Activated CD8-positive, alpha-beta T cell treated with anti-CD3 and anti-CD28 coated beads for 36 hours (primary cell): ENCODE measurements at regions of chr10 and their contacts with region 1.

Region 1: DNA sequence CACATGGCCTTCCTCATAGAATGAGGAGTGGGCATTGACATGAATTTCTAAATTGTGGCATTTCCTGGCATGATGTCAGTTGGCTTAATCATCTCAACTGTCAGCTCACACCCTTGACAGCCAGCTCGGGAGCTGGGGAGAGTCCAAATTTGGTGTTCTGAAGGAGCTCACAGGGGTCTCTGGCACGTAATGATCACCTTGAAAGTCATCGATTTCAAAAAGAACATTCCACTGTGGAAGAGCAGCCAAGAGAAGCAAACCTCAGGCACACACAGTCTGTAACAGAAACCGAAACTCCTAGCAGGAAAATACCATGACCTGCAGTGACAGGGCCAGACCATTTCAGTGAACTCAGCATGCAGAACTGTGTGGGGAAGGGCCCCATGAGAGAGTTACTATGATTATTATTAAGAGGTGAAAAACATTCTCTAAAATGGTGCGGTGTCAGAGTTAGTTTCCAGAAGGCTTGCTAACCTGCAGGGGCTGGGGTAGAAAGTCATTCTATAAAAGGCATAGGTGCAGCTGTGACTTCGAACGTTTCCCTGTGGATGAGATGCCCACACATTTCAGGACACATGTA is 26.4 kb upstream of the KLF6 start:
- DNase-seq: peak; percentile 78
- ATAC-seq: peak; percentile 56
- H3K4me3 Mint-ChIP-seq: peak overlapping the region; percentile 59
- H3K27ac Mint-ChIP-seq: no peak overlapping the region
- H3K4me1 Mint-ChIP-seq: peaks cover 68% of the 10 kb centered on the region
- H3K27me3 Mint-ChIP-seq: no peaks in the 10 kb centered on the region
- CTCF ChIP-seq: no peak

Region 2: GRCh38 chr10:3757638-3758490 is 53.5 kb before region 1 on chr10:
- CTCF ChIA-PET with region 1: interaction called, 5 read pairs
- POLR2A ChIA-PET with region 1: interaction called, 11 read pairs
- intact Hi-C with region 1: no loop called
- DNase-seq: peak; percentile 78
- ATAC-seq: peak; percentile 81
- H3K4me3 Mint-ChIP-seq: peak overlapping the region; percentile 59
- H3K27ac Mint-ChIP-seq: peak overlapping the region; percentile 98
- H3K4me1 Mint-ChIP-seq: peaks cover 79% of the 10 kb centered on the region
- H3K27me3 Mint-ChIP-seq: no peaks in the 10 kb centered on the region
- CTCF ChIP-seq: no peak

Region 3: DNA sequence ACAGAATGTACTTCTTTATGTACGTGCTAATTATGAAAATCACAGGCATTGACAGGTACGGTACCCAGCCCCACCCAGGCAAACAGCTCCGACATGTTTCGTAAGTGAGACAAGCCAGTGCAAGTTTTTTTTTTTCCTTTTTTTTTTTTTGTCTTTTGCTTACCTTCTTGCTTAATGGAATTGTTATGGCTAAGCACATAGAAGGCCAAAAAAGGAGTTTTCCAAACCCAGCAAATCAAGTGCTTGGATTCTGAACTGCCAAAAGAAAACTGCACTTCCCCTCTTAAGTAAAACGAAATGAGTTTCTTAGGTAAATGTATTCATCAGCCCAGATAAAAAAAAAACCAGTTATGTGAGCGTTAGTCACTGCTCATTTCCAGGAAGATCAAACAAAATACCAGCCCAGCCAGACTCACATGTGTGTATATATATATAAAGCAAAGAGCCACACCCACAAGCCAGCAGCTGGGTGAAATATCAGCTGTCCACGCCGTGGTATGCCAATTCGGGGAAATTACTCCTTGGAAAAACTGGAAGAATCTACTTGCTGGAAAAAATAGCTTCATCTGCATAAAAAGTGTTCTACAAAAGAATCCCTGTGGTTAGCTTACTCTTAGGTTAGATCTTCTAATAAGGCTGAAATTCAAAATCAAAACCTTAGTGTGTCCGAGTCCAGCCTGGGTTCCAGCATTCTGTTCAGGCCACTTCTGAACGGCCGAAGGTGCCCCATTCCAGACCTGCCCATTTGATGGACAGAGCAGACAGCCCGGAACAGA is 34.4 kb before region 1 on chr10:
- CTCF ChIA-PET with region 1: no interaction called
- POLR2A ChIA-PET with region 1: interaction called, 281 read pairs
- intact Hi-C with region 1: no loop called
- DNase-seq: peak; percentile 76
- ATAC-seq: peak; percentile 66
- H3K4me3 Mint-ChIP-seq: peak overlapping the region; percentile 56
- H3K27ac Mint-ChIP-seq: peak overlapping the region; percentile 85
- H3K4me1 Mint-ChIP-seq: peaks cover 71% of the 10 kb centered on the region
- H3K27me3 Mint-ChIP-seq: no peaks in the 10 kb centered on the region
- CTCF ChIP-seq: no peak

Region 4: DNA sequence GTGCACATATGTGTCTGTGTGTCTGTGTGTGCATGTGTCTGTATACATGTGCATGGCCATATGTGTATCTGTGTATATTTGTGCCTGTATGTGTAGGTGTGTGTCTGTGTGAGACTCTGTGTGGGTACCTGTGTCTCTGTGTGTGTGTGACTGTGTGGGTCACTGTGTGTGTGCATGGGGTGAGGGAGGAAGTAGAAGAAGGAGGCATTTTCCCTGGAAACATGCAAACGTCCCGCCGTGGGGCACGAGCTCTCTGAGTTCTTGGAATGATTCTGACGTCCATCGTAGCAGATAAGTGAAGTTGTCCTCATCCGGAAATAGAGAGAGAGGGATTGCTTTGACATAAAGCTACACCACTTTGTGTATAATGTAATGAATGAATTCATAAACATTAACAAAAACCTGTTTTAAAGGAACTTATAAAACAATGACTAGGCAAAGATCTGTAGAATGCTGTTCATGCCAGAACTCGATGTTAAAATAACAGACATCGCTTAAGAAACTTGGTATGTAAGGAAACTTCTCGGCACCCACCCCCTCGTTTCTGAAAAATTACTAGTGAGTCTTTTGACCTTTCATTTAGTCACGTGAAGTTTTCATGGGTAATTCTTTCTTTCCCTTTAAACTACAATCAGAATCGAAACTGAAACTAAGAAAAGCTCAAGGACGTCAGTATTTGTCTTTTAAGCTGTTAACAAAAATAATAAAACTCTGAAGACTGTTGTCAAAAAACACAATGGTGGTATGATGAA is 17.2 kb after region 1 on chr10:
- CTCF ChIA-PET with region 1: interaction called, 4 read pairs
- POLR2A ChIA-PET with region 1: interaction called, 31 read pairs
- intact Hi-C with region 1: loop called (anchors 2 kb)
- DNase-seq: peak; percentile 83
- ATAC-seq: peak; percentile 68
- H3K4me3 Mint-ChIP-seq: peak overlapping the region; percentile 56
- H3K27ac Mint-ChIP-seq: peak overlapping the region; percentile 97
- H3K4me1 Mint-ChIP-seq: peaks cover 58% of the 10 kb centered on the region
- H3K27me3 Mint-ChIP-seq: no peaks in the 10 kb centered on the region
- CTCF ChIP-seq: no peak

Region 5: GRCh38 chr10:3869036-3869435 is 57.7 kb after region 1 on chr10:
- CTCF ChIA-PET with region 1: no interaction called
- POLR2A ChIA-PET with region 1: interaction called, 17 read pairs
- intact Hi-C with region 1: loop called (anchors 2 kb)
- DNase-seq: no peak
- ATAC-seq: peak; percentile 18
- H3K4me3 Mint-ChIP-seq: no peak overlapping the region
- H3K27ac Mint-ChIP-seq: peak overlapping the region; percentile 53
- H3K4me1 Mint-ChIP-seq: peaks cover 63% of the 10 kb centered on the region
- H3K27me3 Mint-ChIP-seq: no peaks in the 10 kb centered on the region
- CTCF ChIP-seq: no peak